Dendritic cell treated with granulocyte-macrophage colony-stimulating factor and Interleukin-4, amounts not matched to agents 40 ng/mL and 50 ng/mL, for 4 days (primary cell): ENCODE measurements at regions of chr18 and their contacts with region 1.

Region 1: DNA sequence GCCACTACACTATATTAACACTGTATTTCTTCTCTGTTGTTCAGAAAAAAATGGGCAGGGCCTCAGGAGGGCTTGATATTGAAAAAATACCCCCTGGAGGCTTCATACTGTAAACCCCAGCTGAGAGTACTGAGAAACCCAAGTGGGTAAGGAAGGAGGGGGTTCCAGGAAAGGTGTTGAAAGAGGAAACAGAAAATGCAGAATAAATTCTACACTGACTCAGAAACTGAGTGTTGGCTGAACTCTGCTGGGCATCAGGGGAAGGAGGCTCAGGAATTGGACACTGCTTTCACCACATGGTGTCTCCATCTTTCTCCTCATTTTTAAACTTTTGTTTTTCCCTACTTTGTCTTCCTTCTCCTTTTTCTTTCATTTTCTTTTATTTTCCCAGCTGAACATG is 253.7 kb downstream of the DYM start:
- H3K4me3 Mint-ChIP-seq: no peak overlapping the region
- H3K27ac Mint-ChIP-seq: peak overlapping the region; percentile 18
- H3K4me1 Mint-ChIP-seq: peaks cover 12% of the 10 kb centered on the region
- H3K27me3 Mint-ChIP-seq: no peaks in the 10 kb centered on the region

Region 2: GRCh38 chr18:49274188-49274714 is 67.5 kb after region 1 on chr18:
- intact Hi-C with region 1: loop called (anchors 10 kb)
- H3K4me3 Mint-ChIP-seq: no peak overlapping the region
- H3K27ac Mint-ChIP-seq: no peak overlapping the region
- H3K4me1 Mint-ChIP-seq: no peaks in the 10 kb centered on the region
- H3K27me3 Mint-ChIP-seq: no peaks in the 10 kb centered on the region